ENCODE measurements at regions of chr17 and their contacts with region 1.

Region 1: GRCh38 chr17:48841395-48841831 is 10.6 kb downstream of the CALCOCO2 start:
- DNase-seq: peak in 7 of 9 donors; percentile 48 to 75 (median 62)
- ATAC-seq: peak; percentile 94
- H3K4me3 ChIP-seq: peak overlapping the region; percentile 35
- H3K4me3 Mint-ChIP-seq: peak overlapping the region; percentile 79 to 98 (median 87)
- H3K27ac ChIP-seq: peak overlapping the region; percentile 73
- H3K27ac Mint-ChIP-seq: peak overlapping the region; percentile 84 to 98 (median 95)
- H3K4me1 ChIP-seq: peaks cover 38 to 47% of the 10 kb centered on the region in 2 donors
- H3K4me1 Mint-ChIP-seq: peaks cover 33 to 67% (median 61%) of the 10 kb centered on the region in 7 donors
- H3K27me3 ChIP-seq: no peaks in the 10 kb centered on the region
- H3K27me3 Mint-ChIP-seq: no peaks in the 10 kb centered on the region

Region 2: GRCh38 chr17:48406936-48407567 is 434.4 kb before region 1 on chr17:
- CTCF ChIA-PET with region 1: no interaction called
- POLR2A ChIA-PET with region 1: no interaction called
- intact Hi-C with region 1: no loop called
- DNase-seq: no peak
- ATAC-seq: no peak
- H3K4me3 ChIP-seq: no peak overlapping the region
- H3K4me3 Mint-ChIP-seq: peak overlapping the region in 7 of 10 donors; percentile 8 to 61 (median 38)
- H3K27ac ChIP-seq: no peak overlapping the region
- H3K27ac Mint-ChIP-seq: peak overlapping the region in 8 of 9 donors; percentile 10 to 83 (median 40)
- H3K4me1 ChIP-seq: peaks cover 19 to 20% of the 10 kb centered on the region in 2 donors
- H3K4me1 Mint-ChIP-seq: peaks cover 38 to 84% (median 70%) of the 10 kb centered on the region in 7 donors
- H3K27me3 ChIP-seq: no peaks in the 10 kb centered on the region
- H3K27me3 Mint-ChIP-seq: no peaks in the 10 kb centered on the region

Region 3: DNA sequence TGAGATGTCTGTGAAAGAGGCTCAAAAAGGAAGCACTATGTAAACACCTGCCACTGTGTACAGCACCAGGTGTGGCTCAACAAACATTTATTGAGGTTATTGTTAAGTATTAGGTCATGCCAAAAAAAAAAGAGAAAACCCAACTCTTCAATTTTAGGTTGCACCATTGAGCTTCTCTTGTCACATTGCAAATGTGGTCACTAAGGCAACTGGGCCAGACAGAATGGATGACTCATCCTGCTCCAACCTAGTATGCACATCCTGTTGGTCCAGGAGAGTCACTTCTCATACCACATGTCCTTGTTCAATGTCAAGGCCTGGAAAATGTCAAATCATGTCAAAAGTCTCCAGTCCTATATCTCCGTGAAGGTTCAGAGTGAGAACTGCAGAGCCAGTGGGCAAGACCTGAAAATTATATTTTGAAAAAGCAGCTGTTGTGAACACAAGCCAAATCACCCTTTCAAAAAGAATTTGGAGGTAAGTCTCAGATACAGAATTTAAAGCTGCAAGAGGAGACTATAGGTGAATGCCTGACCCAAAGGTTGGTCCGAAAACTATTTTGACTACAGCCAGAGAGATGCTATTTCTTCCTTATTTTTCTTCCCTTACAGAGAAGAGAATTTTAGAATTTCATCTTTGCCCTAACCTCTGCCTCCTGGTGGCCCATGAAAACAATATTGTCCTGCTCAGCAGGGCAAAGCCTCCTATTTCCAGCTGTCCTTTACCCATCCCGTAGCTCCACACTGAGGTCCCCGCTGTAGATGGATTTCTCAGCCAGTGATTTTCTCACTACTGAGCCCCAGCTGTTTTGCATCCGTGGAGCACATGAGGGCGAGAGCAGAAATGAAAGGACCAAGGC is 335.4 kb before region 1 on chr17:
- CTCF ChIA-PET with region 1: no interaction called
- POLR2A ChIA-PET with region 1: no interaction called
- intact Hi-C with region 1: no loop called
- DNase-seq: peak in 2 of 9 donors; percentile 30 to 33
- ATAC-seq: peak; percentile 89
- H3K4me3 ChIP-seq: no peak overlapping the region
- H3K4me3 Mint-ChIP-seq: peak overlapping the region in 1 of 10 donors; percentile 46
- H3K27ac ChIP-seq: no peak overlapping the region
- H3K27ac Mint-ChIP-seq: peak overlapping the region in 3 of 9 donors; percentile 18 to 91 (median 20)
- H3K4me1 ChIP-seq: peaks cover 0 to 5% of the 10 kb centered on the region in 2 donors
- H3K4me1 Mint-ChIP-seq: peaks cover 0 to 62% (median 6%) of the 10 kb centered on the region in 7 donors
- H3K27me3 ChIP-seq: no peaks in the 10 kb centered on the region
- H3K27me3 Mint-ChIP-seq: peaks cover 6 to 29% (median 24%) of the 10 kb centered on the region in 5 donors

Region 4: GRCh38 chr17:48816774-48817590 is 24.4 kb before region 1 on chr17 and contains the start of gene TTLL6:
- CTCF ChIA-PET with region 1: interaction called, 4 read pairs
- POLR2A ChIA-PET with region 1: interaction called, 3 read pairs
- intact Hi-C with region 1: loop called (anchors 1 to 2 kb)
- DNase-seq: peak; percentile 54 to 90 (median 80)
- ATAC-seq: peak; percentile 98
- H3K4me3 ChIP-seq: peak within 1 kb of the TSS; percentile 60
- H3K4me3 Mint-ChIP-seq: peak within 1 kb of the TSS; percentile 77 to 89 (median 85)
- H3K27ac ChIP-seq: no peak within 1 kb of the TSS
- H3K27ac Mint-ChIP-seq: peak within 1 kb of the TSS in 3 of 9 donors; percentile 3 to 74 (median 14)
- H3K4me1 ChIP-seq: peaks cover 0 to 13% of the 10 kb centered on the region in 2 donors
- H3K4me1 Mint-ChIP-seq: peaks cover 9 to 24% (median 15%) of the 10 kb centered on the region in 7 donors
- H3K27me3 ChIP-seq: no peaks in the 10 kb centered on the region
- H3K27me3 Mint-ChIP-seq: peaks cover 0 to 79% (median 17%) of the 10 kb centered on the region in 5 donors
- total RNA-seq, gene TTLL6: not detected

Region 5: GRCh38 chr17:48860034-48860433 is 18.6 kb after region 1 on chr17:
- CTCF ChIA-PET with region 1: interaction called, 3 read pairs
- POLR2A ChIA-PET with region 1: no interaction called
- intact Hi-C with region 1: loop called in 1 of 2 experiments (anchors 1 kb)
- DNase-seq: no peak
- ATAC-seq: no peak
- H3K4me3 ChIP-seq: no peak overlapping the region
- H3K4me3 Mint-ChIP-seq: no peak overlapping the region
- H3K27ac ChIP-seq: no peak overlapping the region
- H3K27ac Mint-ChIP-seq: no peak overlapping the region
- H3K4me1 ChIP-seq: no peaks in the 10 kb centered on the region
- H3K4me1 Mint-ChIP-seq: peaks cover 0 to 12% (median 0%) of the 10 kb centered on the region in 7 donors
- H3K27me3 ChIP-seq: no peaks in the 10 kb centered on the region
- H3K27me3 Mint-ChIP-seq: no peaks in the 10 kb centered on the region